Caco-2 (cell line): ENCODE measurements at regions of chr17 and their contacts with region 1.

Region 1: DNA sequence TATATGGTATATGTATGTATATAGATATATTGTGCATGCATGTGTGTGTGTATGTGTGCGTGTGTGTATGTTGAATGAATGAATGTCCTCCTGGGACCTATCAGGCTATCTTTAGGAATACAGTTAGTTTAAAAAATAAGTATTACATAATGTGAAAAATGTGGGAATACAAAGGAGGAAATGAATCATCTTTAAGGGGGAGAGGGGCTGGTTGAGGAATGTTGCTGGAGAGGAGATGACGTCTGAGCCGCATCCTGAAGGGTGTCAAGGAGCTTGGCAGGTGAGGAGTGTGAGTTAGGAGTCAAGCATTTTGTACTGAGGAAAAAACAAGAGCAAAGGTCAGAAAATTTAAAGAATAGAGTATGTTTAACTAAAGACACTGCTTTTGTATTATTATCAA is 62.4 kb upstream of the NLK start:
- DNase-seq: peak in 1 of 2 experiments; percentile 77
- H3K4me3 ChIP-seq: no peak overlapping the region
- H3K4me3 Mint-ChIP-seq: peak overlapping the region; percentile 0
- H3K27ac Mint-ChIP-seq: peak overlapping the region; percentile 27
- H3K4me1 ChIP-seq: peaks cover 59% of the 10 kb centered on the region
- H3K4me1 Mint-ChIP-seq: peaks cover 59% of the 10 kb centered on the region
- H3K27me3 ChIP-seq: no peaks in the 10 kb centered on the region
- H3K27me3 Mint-ChIP-seq: no peaks in the 10 kb centered on the region
- CTCF ChIP-seq: no peak

Region 2: DNA sequence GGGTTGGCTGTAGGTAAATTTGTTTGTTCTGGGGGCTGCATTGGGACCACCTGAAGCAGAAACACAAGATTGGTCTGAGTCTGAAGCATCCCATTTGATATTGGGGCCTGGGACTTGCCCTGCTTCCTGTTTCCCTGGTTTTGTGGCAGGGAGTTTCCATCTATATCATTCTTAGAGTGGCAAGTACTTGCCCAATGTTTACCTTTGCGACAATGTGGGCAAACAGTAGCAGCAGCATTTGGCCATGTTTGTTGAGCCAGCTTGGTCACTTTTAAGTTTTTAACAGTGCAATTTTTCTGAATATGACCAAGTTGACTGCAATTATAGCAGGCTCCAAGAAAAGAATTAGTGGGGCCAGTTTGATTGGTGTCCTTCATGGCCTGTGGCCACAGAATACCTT is 287.3 kb before region 1 on chr17:
- CTCF ChIA-PET with region 1: no interaction called
- POLR2A ChIA-PET with region 1: no interaction called
- intact Hi-C with region 1: loop called (anchors 10 kb)
- DNase-seq: peak in 1 of 2 experiments; percentile 21
- H3K4me3 ChIP-seq: no peak overlapping the region
- H3K4me3 Mint-ChIP-seq: no peak overlapping the region
- H3K27ac Mint-ChIP-seq: no peak overlapping the region
- H3K4me1 ChIP-seq: peaks cover 13% of the 10 kb centered on the region
- H3K4me1 Mint-ChIP-seq: peaks cover 15% of the 10 kb centered on the region
- H3K27me3 ChIP-seq: no peaks in the 10 kb centered on the region
- H3K27me3 Mint-ChIP-seq: no peaks in the 10 kb centered on the region
- CTCF ChIP-seq: no peak

Region 3: GRCh38 chr17:27793168-27793905 is 186.7 kb before region 1 on chr17:
- CTCF ChIA-PET with region 1: no interaction called
- POLR2A ChIA-PET with region 1: no interaction called
- intact Hi-C with region 1: loop called (anchors 1 kb)
- DNase-seq: peak; percentile 83 to 90
- H3K4me3 ChIP-seq: peak overlapping the region; percentile 56
- H3K4me3 Mint-ChIP-seq: peak overlapping the region; percentile 80
- H3K27ac Mint-ChIP-seq: peak overlapping the region; percentile 53
- H3K4me1 ChIP-seq: peaks cover 42% of the 10 kb centered on the region
- H3K4me1 Mint-ChIP-seq: peaks cover 44% of the 10 kb centered on the region
- H3K27me3 ChIP-seq: no peaks in the 10 kb centered on the region
- H3K27me3 Mint-ChIP-seq: no peaks in the 10 kb centered on the region
- CTCF ChIP-seq: no peak

Region 4: GRCh38 chr17:27862004-27862403 is 118.0 kb before region 1 on chr17:
- CTCF ChIA-PET with region 1: no interaction called
- POLR2A ChIA-PET with region 1: no interaction called
- intact Hi-C with region 1: no loop called
- DNase-seq: peak; percentile 41 to 70
- H3K4me3 ChIP-seq: no peak overlapping the region
- H3K4me3 Mint-ChIP-seq: no peak overlapping the region
- H3K27ac Mint-ChIP-seq: no peak overlapping the region
- H3K4me1 ChIP-seq: peaks cover 26% of the 10 kb centered on the region
- H3K4me1 Mint-ChIP-seq: peaks cover 21% of the 10 kb centered on the region
- H3K27me3 ChIP-seq: no peaks in the 10 kb centered on the region
- H3K27me3 Mint-ChIP-seq: no peaks in the 10 kb centered on the region
- CTCF ChIP-seq: no peak

Region 5: GRCh38 chr17:27892866-27893769 is 86.9 kb before region 1 on chr17 and contains the start of gene LYRM9:
- CTCF ChIA-PET with region 1: interaction called, 5 read pairs
- POLR2A ChIA-PET with region 1: interaction called, 3 read pairs
- intact Hi-C with region 1: loop called (anchors 5 kb)
- DNase-seq: peak; percentile 98 to 100
- H3K4me3 ChIP-seq: peak within 1 kb of the TSS; percentile 75
- H3K4me3 Mint-ChIP-seq: peak within 1 kb of the TSS; percentile 70
- H3K27ac Mint-ChIP-seq: peak within 1 kb of the TSS; percentile 28
- H3K4me1 ChIP-seq: peaks cover 39% of the 10 kb centered on the region
- H3K4me1 Mint-ChIP-seq: peaks cover 47% of the 10 kb centered on the region
- H3K27me3 ChIP-seq: no peaks in the 10 kb centered on the region
- H3K27me3 Mint-ChIP-seq: no peaks in the 10 kb centered on the region
- CTCF ChIP-seq: peak; percentile 98 to 99
- total RNA-seq, gene LYRM9: 25.6 and 29.1 TPM in 2 replicates

Region 6: GRCh38 chr17:27954548-27955495 is 25.2 kb before region 1 on chr17:
- CTCF ChIA-PET with region 1: interaction called, 3 read pairs
- POLR2A ChIA-PET with region 1: no interaction called
- intact Hi-C with region 1: loop called (anchors 2 kb)
- DNase-seq: peak in 1 of 2 experiments; percentile 46
- H3K4me3 ChIP-seq: no peak overlapping the region
- H3K4me3 Mint-ChIP-seq: no peak overlapping the region
- H3K27ac Mint-ChIP-seq: no peak overlapping the region
- H3K4me1 ChIP-seq: peaks cover 56% of the 10 kb centered on the region
- H3K4me1 Mint-ChIP-seq: peaks cover 43% of the 10 kb centered on the region
- H3K27me3 ChIP-seq: no peaks in the 10 kb centered on the region
- H3K27me3 Mint-ChIP-seq: no peaks in the 10 kb centered on the region
- CTCF ChIP-seq: peak in 1 of 2 experiments; percentile 3

Region 7: GRCh38 chr17:27965224-27965623 is 14.8 kb before region 1 on chr17:
- CTCF ChIA-PET with region 1: no interaction called
- POLR2A ChIA-PET with region 1: no interaction called
- intact Hi-C with region 1: no loop called
- DNase-seq: no peak
- H3K4me3 ChIP-seq: no peak overlapping the region
- H3K4me3 Mint-ChIP-seq: no peak overlapping the region
- H3K27ac Mint-ChIP-seq: no peak overlapping the region
- H3K4me1 ChIP-seq: peaks cover 6% of the 10 kb centered on the region; the same call in 1 of the 2 replicates
- H3K4me1 Mint-ChIP-seq: no peaks in the 10 kb centered on the region
- H3K27me3 ChIP-seq: no peaks in the 10 kb centered on the region
- H3K27me3 Mint-ChIP-seq: no peaks in the 10 kb centered on the region
- CTCF ChIP-seq: no peak

Region 8: DNA sequence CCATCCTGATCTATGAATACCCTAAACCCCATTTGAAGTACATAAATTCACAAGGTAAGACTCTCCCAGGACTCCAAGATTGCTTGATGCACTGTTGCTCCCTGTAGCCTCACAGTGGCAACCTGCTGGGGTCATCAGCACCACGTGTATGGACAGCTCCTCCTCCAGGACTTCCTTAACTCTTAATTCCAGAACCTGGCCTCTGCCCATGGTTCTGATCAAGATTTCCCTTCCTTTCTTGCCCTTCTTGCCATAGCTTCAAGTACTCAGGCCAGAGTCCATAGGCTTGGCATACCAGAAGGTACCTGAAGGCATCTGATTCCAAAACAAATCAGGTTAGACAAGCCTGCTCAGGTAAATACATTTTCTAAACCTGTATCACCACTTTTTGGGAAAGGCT is 28.5 kb after region 1 on chr17:
- CTCF ChIA-PET with region 1: interaction called, 4 read pairs
- POLR2A ChIA-PET with region 1: no interaction called
- intact Hi-C with region 1: loop called (anchors 1 kb)
- DNase-seq: peak; percentile 91 to 94
- H3K4me3 ChIP-seq: no peak overlapping the region
- H3K4me3 Mint-ChIP-seq: no peak overlapping the region
- H3K27ac Mint-ChIP-seq: no peak overlapping the region
- H3K4me1 ChIP-seq: peaks cover 5% of the 10 kb centered on the region; the same call in 1 of the 2 replicates
- H3K4me1 Mint-ChIP-seq: no peaks in the 10 kb centered on the region
- H3K27me3 ChIP-seq: no peaks in the 10 kb centered on the region
- H3K27me3 Mint-ChIP-seq: peaks cover 5% of the 10 kb centered on the region
- CTCF ChIP-seq: peak in 1 of 2 experiments; percentile 0

Region 9: GRCh38 chr17:28227316-28228125 is 247.5 kb after region 1 on chr17:
- CTCF ChIA-PET with region 1: no interaction called
- POLR2A ChIA-PET with region 1: no interaction called
- intact Hi-C with region 1: loop called (anchors 10 kb)
- DNase-seq: peak; percentile 100
- H3K4me3 ChIP-seq: peak overlapping the region; percentile 88
- H3K4me3 Mint-ChIP-seq: peak overlapping the region; percentile 91
- H3K27ac Mint-ChIP-seq: peak overlapping the region; percentile 95
- H3K4me1 ChIP-seq: peaks cover 32% of the 10 kb centered on the region
- H3K4me1 Mint-ChIP-seq: peaks cover 24% of the 10 kb centered on the region
- H3K27me3 ChIP-seq: no peaks in the 10 kb centered on the region
- H3K27me3 Mint-ChIP-seq: no peaks in the 10 kb centered on the region
- CTCF ChIP-seq: peak; percentile 16 to 45